ENCODE measurements at regions of chr6 and their contacts with region 1.

Region 1: GRCh38 chr6:131199568-131200272 is 64.5 kb downstream of the AKAP7 start:
- DNase-seq: peak; percentile 67
- H3K4me3 Mint-ChIP-seq: no peak overlapping the region
- H3K27ac Mint-ChIP-seq: no peak overlapping the region
- H3K4me1 Mint-ChIP-seq: no peaks in the 10 kb centered on the region
- H3K27me3 Mint-ChIP-seq: no peaks in the 10 kb centered on the region
- CTCF ChIP-seq: peak; percentile 77

Region 2: DNA sequence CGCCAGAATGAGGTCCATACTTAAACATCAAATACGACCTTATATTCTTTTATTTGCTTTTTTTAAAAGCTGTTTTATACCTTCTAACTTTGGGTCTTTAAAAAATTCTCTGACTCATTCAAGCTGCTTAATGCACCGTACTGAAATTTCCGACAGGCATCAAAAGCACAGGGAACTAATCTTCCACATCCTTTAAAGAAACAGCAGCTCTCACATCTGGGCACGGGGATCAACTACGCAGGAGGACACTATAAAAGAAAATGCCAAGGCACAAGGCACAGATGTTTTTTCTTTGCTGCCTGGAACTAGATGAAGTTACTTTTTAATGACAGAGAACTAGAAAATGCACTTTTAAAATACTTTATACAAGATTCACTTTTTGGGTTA is 260.9 kb after region 1 on chr6:
- CTCF ChIA-PET with region 1: no interaction called
- POLR2A ChIA-PET with region 1: no interaction called
- intact Hi-C with region 1: loop called (anchors 5 kb)
- DNase-seq: no peak
- H3K4me3 Mint-ChIP-seq: no peak overlapping the region
- H3K27ac Mint-ChIP-seq: no peak overlapping the region
- H3K4me1 Mint-ChIP-seq: peaks cover 9% of the 10 kb centered on the region
- H3K27me3 Mint-ChIP-seq: no peaks in the 10 kb centered on the region
- CTCF ChIP-seq: no peak